ENCODE measurements at regions of chr1 and their contacts with region 1.

Region 1: DNA sequence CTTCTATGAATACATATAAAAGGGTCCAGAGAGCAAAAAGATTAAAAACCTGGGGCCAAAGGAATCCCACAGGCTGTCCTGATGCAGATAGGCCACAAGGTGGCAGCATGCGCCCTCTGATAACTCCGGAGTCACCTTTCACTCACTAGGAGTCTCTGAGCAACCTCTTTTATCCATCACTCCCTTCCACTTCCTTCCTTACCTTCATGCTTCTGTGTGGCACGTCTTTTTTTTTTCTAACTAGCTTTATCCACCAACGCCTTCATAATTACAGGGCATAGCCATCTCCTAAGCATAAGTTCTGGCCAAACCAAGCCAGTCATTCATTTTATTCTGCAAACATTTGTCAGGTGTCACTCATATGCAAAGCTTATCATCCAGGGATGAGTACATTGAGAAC is 3.9 kb upstream of the PGLYRP4 start:
- DNase-seq: peak; percentile 77
- H3K4me3 Mint-ChIP-seq: no peak overlapping the region
- H3K27ac Mint-ChIP-seq: no peak overlapping the region
- H3K4me1 Mint-ChIP-seq: peaks cover 15% of the 10 kb centered on the region
- H3K27me3 Mint-ChIP-seq: peaks cover 64% of the 10 kb centered on the region

Region 2: GRCh38 chr1:153380711-153381110 is 28.2 kb after region 1 on chr1:
- CTCF ChIA-PET with region 1: no interaction called
- DNase-seq: no peak
- H3K4me3 Mint-ChIP-seq: no peak overlapping the region
- H3K27ac Mint-ChIP-seq: no peak overlapping the region
- H3K4me1 Mint-ChIP-seq: no peaks in the 10 kb centered on the region
- H3K27me3 Mint-ChIP-seq: peaks cover 23% of the 10 kb centered on the region

Region 3: GRCh38 chr1:153404768-153405167 is 52.2 kb after region 1 on chr1:
- CTCF ChIA-PET with region 1: interaction called, 21 read pairs
- DNase-seq: peak; percentile 65
- H3K4me3 Mint-ChIP-seq: no peak overlapping the region
- H3K27ac Mint-ChIP-seq: no peak overlapping the region
- H3K4me1 Mint-ChIP-seq: peaks cover 16% of the 10 kb centered on the region
- H3K27me3 Mint-ChIP-seq: peaks cover 21% of the 10 kb centered on the region

Region 4: GRCh38 chr1:153465811-153466636 is 113.5 kb after region 1 on chr1:
- CTCF ChIA-PET with region 1: interaction called, 10 read pairs
- DNase-seq: peak; percentile 71
- H3K4me3 Mint-ChIP-seq: no peak overlapping the region
- H3K27ac Mint-ChIP-seq: no peak overlapping the region
- H3K4me1 Mint-ChIP-seq: no peaks in the 10 kb centered on the region
- H3K27me3 Mint-ChIP-seq: peaks cover 45% of the 10 kb centered on the region